ENCODE measurements at regions of chr13 and their contacts with region 1.

Region 1: DNA sequence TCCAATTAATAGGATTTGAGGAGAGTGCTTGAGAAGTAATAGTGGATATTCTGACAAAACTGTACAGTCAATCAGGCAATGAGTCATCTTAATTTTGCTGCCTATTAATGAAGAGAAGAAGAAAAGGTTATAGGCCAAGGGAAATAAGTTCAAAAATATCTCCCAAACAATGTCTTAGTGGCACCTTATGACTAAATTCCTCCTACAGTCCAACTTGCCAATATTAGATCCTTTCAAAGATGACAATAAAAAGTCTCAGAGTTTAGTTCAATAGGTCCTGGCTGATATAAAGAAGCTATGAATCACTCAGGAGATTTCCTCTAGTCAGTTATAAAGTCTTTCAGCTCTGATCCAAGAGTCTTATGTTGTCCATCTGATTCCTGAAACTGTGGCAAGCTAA is 27.9 kb downstream of the UGGT2 start:
- DNase-seq: no peak
- H3K4me3 ChIP-seq: no peak overlapping the region
- H3K27ac ChIP-seq: no peak overlapping the region
- H3K4me1 ChIP-seq: no peaks in the 10 kb centered on the region
- CTCF ChIP-seq: no peak

Region 2: DNA sequence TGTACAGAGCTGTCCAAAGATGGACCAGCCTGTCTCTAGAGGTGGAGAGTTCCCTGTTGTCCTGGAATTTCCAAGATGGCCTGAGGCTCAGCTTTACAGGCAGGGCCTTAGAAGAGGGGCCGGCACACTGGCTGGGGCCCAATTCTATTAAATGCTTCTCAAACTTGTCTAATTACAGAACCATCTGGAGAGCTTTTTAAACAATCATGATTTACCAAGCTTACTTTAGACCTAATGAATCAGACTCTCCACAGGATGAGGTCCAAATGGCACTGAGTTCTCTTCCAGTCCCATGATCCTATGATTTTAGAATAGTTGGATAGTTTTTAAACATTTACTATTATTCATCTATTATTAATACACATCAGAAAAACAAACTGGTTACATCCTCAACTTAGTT is 224.8 kb before region 1 on chr13:
- CTCF ChIA-PET with region 1: no interaction called
- POLR2A ChIA-PET with region 1: no interaction called
- intact Hi-C with region 1: no loop called
- DNase-seq: no peak
- H3K4me3 ChIP-seq: no peak overlapping the region
- H3K27ac ChIP-seq: no peak overlapping the region
- H3K4me1 ChIP-seq: no peaks in the 10 kb centered on the region
- CTCF ChIP-seq: no peak

Region 3: DNA sequence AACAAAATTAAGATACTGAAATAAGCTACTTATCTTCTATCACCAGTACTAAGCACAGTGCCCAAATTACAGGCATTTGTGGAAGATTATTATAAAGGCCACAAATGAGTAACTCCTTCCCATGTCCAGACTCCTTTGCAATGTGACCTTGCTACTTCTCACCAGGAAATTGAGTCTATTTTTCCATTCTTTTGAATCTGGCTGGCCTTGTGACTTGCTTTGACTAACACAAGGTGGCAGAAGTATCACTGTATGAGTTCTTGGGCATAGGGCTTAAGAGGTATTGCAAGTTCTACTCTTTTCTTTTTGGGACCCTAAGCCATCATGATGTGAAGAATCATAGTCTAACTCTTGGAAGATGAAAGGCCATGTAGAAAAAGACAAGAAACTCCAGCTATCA is 22.0 kb before region 1 on chr13:
- CTCF ChIA-PET with region 1: no interaction called
- POLR2A ChIA-PET with region 1: no interaction called
- intact Hi-C with region 1: no loop called
- DNase-seq: no peak
- H3K4me3 ChIP-seq: no peak overlapping the region
- H3K27ac ChIP-seq: no peak overlapping the region
- H3K4me1 ChIP-seq: no peaks in the 10 kb centered on the region
- CTCF ChIP-seq: no peak

Region 4: GRCh38 chr13:96053011-96053703 is 27.9 kb after region 1 on chr13 and contains the start of gene UGGT2:
- CTCF ChIA-PET with region 1: no interaction called
- POLR2A ChIA-PET with region 1: no interaction called
- intact Hi-C with region 1: loop called (anchors 2 kb)
- DNase-seq: no peak
- H3K4me3 ChIP-seq: no peak within 1 kb of the TSS
- H3K27ac ChIP-seq: no peak within 1 kb of the TSS
- H3K4me1 ChIP-seq: no peaks in the 10 kb centered on the region
- CTCF ChIP-seq: no peak
- total RNA-seq, gene UGGT2: not detected in 2 replicates

Region 5: GRCh38 chr13:96104516-96104915 is 79.2 kb after region 1 on chr13:
- CTCF ChIA-PET with region 1: no interaction called
- POLR2A ChIA-PET with region 1: no interaction called
- intact Hi-C with region 1: no loop called
- DNase-seq: no peak
- H3K4me3 ChIP-seq: no peak overlapping the region
- H3K27ac ChIP-seq: no peak overlapping the region
- H3K4me1 ChIP-seq: no peaks in the 10 kb centered on the region
- CTCF ChIP-seq: no peak

Measured in OCI-LY7 (cell line).